ENCODE measurements at regions of chr1 and their contacts with region 1.

Region 1: DNA sequence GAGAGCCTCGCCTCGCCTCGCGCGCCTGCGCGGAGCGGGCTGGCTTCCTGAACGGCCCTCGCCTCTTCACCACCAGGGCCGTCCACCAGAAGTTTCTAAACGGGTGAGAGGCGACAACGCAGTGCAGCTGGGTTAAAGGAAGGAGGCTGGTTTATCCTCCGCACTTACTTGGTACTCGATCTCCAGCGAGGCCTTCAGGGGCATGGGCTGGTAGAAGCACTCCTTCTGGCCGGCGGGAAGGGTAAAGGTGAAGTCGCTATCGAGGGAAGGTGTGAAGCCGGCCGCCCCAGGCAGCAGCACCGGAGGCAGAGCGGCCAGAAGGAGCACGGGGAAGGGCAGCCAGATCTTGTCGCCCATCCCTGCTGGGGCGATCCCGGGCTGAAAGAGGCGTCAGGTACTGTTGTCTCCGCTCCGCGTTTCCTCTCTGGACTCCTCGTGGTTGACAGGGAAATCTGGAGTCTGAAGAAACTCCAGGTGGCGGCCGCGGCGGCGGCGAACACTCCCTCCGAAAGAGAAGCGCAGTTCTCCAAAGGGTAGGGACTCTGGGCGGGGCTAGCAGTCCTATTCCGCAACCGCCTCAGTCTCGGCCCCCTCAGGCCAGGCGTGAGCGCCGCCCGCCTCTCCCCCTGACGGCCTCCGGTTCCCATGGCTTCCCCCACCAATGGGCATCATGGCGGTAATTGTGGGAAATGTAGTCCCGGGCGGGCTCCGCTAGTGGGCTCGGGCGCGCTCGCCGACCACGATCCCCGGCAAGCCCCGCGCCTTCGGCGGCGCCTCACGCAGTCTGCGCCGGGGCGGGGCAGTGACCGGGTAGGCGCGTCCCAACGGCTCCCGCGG is at the start of gene TMED5:
- DNase-seq: peak; percentile 97 to 98
- H3K4me3 ChIP-seq: peak within 1 kb of the TSS; percentile 86
- H3K27ac ChIP-seq: peak within 1 kb of the TSS; percentile 98
- H3K4me1 ChIP-seq: peaks cover 51% of the 10 kb centered on the region
- H3K27me3 ChIP-seq: no peaks in the 10 kb centered on the region
- CTCF ChIP-seq: peak; percentile 38; the same call in 1 of the 2 replicates
- total RNA-seq, gene TMED5: 45.6 and 51.0 TPM in 2 replicates

Region 2: DNA sequence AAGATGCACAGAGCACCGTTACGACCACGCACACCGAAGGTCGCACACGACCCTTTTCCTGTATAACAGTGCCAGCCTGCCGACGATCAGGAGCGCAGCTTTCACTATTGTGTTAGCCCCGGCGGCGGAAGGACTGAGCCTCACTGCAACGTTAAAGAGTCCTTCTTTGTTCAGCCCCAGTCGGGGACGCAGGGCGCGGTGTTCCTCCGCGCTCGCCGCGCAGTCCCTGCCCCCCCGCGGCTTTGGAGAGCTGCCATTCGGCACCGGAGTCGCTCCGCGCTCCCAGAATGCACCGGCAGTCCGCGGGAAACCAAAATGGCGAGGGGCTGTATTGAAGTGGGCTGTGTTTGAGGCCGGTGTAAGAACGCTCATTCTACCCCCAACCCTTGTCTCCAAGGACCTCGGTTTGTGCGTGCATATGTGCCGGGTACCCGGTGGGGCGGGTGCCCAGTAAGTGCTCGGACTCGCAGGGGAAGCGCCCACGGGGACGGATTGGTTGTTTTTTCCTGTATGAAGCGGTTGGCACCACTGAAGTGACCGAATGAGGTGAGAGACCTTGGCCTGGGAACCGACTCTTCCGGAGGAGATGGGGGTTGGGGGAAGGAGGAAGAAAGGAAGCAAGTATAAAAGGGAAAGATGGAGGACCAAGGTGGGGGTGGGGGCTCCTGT is 101.0 kb before region 1 on chr1 and contains the start of gene MTF2:
- CTCF ChIA-PET with region 1: no interaction called
- POLR2A ChIA-PET with region 1: no interaction called
- intact Hi-C with region 1: loop called (anchors 1 kb)
- DNase-seq: peak; percentile 91 to 95
- H3K4me3 ChIP-seq: peak within 1 kb of the TSS; percentile 87
- H3K27ac ChIP-seq: peak within 1 kb of the TSS; percentile 58
- H3K4me1 ChIP-seq: peaks cover 25% of the 10 kb centered on the region
- H3K27me3 ChIP-seq: no peaks in the 10 kb centered on the region
- CTCF ChIP-seq: no peak
- total RNA-seq, gene MTF2: 31.7 and 38.6 TPM in 2 replicates

Region 3: GRCh38 chr1:93111561-93111960 is 68.5 kb before region 1 on chr1:
- CTCF ChIA-PET with region 1: no interaction called
- POLR2A ChIA-PET with region 1: no interaction called
- intact Hi-C with region 1: no loop called
- DNase-seq: no peak
- H3K4me3 ChIP-seq: no peak overlapping the region
- H3K27ac ChIP-seq: peak overlapping the region; percentile 21; the same call in 1 of the 2 replicates
- H3K4me1 ChIP-seq: peaks cover 5% of the 10 kb centered on the region
- H3K27me3 ChIP-seq: no peaks in the 10 kb centered on the region
- CTCF ChIP-seq: no peak

Region 4: GRCh38 chr1:93317207-93317606 is 137.1 kb after region 1 on chr1:
- CTCF ChIA-PET with region 1: no interaction called
- POLR2A ChIA-PET with region 1: no interaction called
- intact Hi-C with region 1: no loop called
- DNase-seq: no peak
- H3K4me3 ChIP-seq: no peak overlapping the region
- H3K27ac ChIP-seq: no peak overlapping the region
- H3K4me1 ChIP-seq: peaks cover 12% of the 10 kb centered on the region
- H3K27me3 ChIP-seq: no peaks in the 10 kb centered on the region
- CTCF ChIP-seq: no peak

Measured in PC-9 (cell line).